ENCODE measurements at regions of chr7 and their contacts with region 1.

Region 1: GRCh38 chr7:155509725-155510551 is 36.4 kb downstream of the CNPY1 start:
- DNase-seq: no peak
- H3K4me3 Mint-ChIP-seq: peak overlapping the region; percentile 54
- H3K27ac Mint-ChIP-seq: no peak overlapping the region
- H3K4me1 Mint-ChIP-seq: peaks cover 18% of the 10 kb centered on the region
- H3K27me3 Mint-ChIP-seq: peaks cover 73% of the 10 kb centered on the region

Region 2: DNA sequence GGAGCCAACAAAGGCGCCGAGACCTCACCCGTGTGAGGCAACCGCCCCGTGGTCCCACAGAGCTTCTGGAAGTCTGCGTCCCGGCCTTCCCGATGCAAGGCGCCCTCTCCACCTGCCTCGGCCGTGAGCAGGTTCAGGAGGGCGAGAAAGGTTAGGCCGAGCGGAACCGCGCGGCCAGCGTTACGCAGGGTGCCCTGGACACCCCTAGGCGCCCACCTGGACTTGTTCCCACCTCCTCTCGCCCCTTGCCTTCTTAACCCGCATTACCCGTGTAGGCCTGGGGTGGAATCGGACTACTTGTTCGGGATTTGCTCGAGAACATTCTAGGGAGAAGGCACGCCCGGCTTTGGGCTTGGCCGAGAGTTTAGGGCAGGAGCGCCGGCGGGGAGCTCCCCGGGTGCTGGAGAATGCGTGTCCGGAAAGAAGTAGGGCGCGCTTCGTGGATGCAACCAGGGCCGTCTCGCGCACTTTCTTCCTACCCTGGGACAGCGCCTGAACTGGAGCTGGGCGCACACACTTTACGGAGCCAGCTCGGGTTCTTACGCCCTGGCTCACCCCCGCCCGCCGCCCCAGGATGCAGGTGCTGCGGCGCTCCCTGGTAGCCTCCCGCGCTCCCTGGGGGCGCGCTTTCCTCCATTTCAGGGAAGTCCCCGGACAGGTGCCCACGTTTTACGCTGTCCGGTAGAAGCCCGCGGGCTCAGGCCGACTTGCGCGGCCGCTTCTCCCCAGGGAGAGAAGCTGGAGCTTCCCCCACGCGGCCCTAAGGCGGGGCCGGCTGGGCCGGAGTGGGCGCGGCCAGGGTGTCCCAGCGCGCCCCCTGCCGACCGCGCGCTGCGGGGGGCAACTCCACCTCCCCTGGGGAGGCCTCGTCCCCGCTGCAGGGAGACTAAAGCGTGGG is 137.8 kb before region 1 on chr7:
- CTCF ChIA-PET with region 1: no interaction called
- intact Hi-C with region 1: loop called (anchors 2 kb)
- DNase-seq: no peak
- H3K4me3 Mint-ChIP-seq: no peak overlapping the region
- H3K27ac Mint-ChIP-seq: no peak overlapping the region
- H3K4me1 Mint-ChIP-seq: peaks cover 31% of the 10 kb centered on the region
- H3K27me3 Mint-ChIP-seq: peaks cover 66% of the 10 kb centered on the region

Region 3: DNA sequence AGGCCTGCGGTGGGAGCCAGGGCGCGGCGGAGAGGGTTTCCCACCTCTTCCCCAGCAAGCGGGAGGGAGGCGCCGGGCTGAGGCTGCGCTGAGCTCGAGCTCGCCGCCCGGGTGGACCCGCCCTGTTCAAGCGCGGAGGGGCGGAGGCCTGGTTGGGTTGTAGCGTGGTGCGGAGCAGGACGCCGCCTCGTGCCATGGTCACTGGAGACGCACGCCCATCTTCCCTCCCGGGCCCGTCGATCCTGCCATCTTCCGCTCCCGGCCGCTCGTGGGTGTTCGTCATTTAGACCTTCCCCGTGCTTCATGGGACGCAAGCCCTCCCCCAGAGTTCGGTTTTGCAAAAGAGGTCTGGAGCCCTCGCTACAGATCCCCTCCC is 61.3 kb before region 1 on chr7:
- CTCF ChIA-PET with region 1: interaction called, 4 read pairs
- intact Hi-C with region 1: loop called (anchors 2 kb)
- DNase-seq: no peak
- H3K4me3 Mint-ChIP-seq: no peak overlapping the region
- H3K27ac Mint-ChIP-seq: no peak overlapping the region
- H3K4me1 Mint-ChIP-seq: peaks cover 10% of the 10 kb centered on the region
- H3K27me3 Mint-ChIP-seq: peaks cover 56% of the 10 kb centered on the region

Region 4: DNA sequence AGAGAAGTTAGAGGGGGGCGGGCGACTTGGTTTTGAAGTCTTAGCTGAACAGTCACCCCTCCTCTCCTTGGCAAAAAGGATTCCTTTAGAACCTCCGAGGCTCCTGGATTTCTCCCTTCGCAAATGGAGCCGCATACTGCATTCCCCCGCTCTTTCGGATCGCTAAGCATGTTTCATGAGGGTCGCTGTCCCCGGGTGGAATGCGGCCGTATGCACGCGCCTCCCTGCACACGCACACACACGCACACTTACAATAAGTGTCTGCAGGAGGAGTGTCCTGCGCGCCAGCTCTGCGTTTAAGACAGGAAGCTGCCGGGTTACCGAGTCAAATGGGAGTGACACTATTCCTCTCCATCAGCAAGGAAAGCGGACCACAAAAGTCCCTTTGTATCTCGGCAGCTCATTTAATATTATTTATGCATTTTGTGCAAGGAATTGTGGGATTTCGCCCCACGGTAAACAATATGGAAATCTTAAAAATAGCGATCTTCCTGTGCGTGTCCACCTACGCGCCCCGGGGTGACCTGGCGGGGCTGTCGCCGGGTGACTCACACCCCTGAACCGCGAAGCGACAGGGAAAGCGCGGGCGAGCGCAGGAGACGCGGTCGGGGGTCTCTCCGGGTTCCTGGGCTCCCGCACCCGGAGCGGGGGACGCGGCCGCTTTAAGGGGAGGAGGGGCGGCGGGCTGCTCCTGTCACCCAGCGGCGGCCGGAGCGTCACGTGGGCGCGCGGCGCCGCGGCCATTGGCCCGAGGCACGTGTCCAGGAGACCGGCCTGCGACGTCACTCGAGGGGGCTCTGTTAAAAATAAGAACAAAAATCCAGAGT is 53.0 kb before region 1 on chr7:
- CTCF ChIA-PET with region 1: no interaction called
- intact Hi-C with region 1: loop called (anchors 2 kb)
- DNase-seq: peak; percentile 45
- H3K4me3 Mint-ChIP-seq: peak overlapping the region; percentile 63
- H3K27ac Mint-ChIP-seq: peak overlapping the region; percentile 18
- H3K4me1 Mint-ChIP-seq: peaks cover 22% of the 10 kb centered on the region
- H3K27me3 Mint-ChIP-seq: peaks cover 75% of the 10 kb centered on the region

Measured in activated naive CD4-positive, alpha-beta T cell treated with anti-CD3 and anti-CD28 coated beads for 36 hours (primary cell).